ENCODE measurements at regions of chr3 and their contacts with region 1.

Region 1: GRCh38 chr3:150319904-150320303 is 88.2 kb upstream of the TSC22D2 start:
- DNase-seq: peak; percentile 96
- ATAC-seq: peak; percentile 94
- H3K4me3 ChIP-seq: no peak overlapping the region
- H3K27ac ChIP-seq: no peak overlapping the region
- H3K4me1 ChIP-seq: peaks cover 7% of the 10 kb centered on the region
- H3K27me3 ChIP-seq: no peaks in the 10 kb centered on the region
- CTCF ChIP-seq: no peak
- POLR2A ChIP-seq: no peak
- RAD21 ChIP-seq: no peak

Region 2: GRCh38 chr3:150333482-150333881 is 13.6 kb after region 1 on chr3:
- CTCF ChIA-PET with region 1: interaction called, 6 read pairs
- POLR2A ChIA-PET with region 1: no interaction called
- dilution Hi-C with region 1: no loop called
- in situ Hi-C with region 1: no loop called
- intact Hi-C with region 1: loop called (anchors 1 kb)
- DNase-seq: no peak
- ATAC-seq: no peak
- H3K4me3 ChIP-seq: no peak overlapping the region
- H3K27ac ChIP-seq: no peak overlapping the region
- H3K4me1 ChIP-seq: peaks cover 3% of the 10 kb centered on the region; the same call in 1 of the 2 replicates
- H3K27me3 ChIP-seq: no peaks in the 10 kb centered on the region; the same call in 1 of the 2 replicates
- CTCF ChIP-seq: no peak
- POLR2A ChIP-seq: no peak
- RAD21 ChIP-seq: no peak

Region 3: GRCh38 chr3:150469031-150469942 is 149.4 kb after region 1 on chr3:
- CTCF ChIA-PET with region 1: no interaction called
- POLR2A ChIA-PET with region 1: no interaction called
- dilution Hi-C with region 1: no loop called
- in situ Hi-C with region 1: no loop called
- intact Hi-C with region 1: no loop called
- DNase-seq: peak; percentile 98
- ATAC-seq: peak; percentile 93
- H3K4me3 ChIP-seq: no peak overlapping the region
- H3K27ac ChIP-seq: peak overlapping the region; percentile 47
- H3K4me1 ChIP-seq: peaks cover 7% of the 10 kb centered on the region
- H3K27me3 ChIP-seq: no peaks in the 10 kb centered on the region
- CTCF ChIP-seq: no peak
- POLR2A ChIP-seq: peak; percentile 33; the same call in 1 of the 2 replicates
- RAD21 ChIP-seq: no peak